Heart left ventricle (tissue), 16 donors: ENCODE measurements at regions of chr5 and their contacts with region 1.

Region 1: DNA sequence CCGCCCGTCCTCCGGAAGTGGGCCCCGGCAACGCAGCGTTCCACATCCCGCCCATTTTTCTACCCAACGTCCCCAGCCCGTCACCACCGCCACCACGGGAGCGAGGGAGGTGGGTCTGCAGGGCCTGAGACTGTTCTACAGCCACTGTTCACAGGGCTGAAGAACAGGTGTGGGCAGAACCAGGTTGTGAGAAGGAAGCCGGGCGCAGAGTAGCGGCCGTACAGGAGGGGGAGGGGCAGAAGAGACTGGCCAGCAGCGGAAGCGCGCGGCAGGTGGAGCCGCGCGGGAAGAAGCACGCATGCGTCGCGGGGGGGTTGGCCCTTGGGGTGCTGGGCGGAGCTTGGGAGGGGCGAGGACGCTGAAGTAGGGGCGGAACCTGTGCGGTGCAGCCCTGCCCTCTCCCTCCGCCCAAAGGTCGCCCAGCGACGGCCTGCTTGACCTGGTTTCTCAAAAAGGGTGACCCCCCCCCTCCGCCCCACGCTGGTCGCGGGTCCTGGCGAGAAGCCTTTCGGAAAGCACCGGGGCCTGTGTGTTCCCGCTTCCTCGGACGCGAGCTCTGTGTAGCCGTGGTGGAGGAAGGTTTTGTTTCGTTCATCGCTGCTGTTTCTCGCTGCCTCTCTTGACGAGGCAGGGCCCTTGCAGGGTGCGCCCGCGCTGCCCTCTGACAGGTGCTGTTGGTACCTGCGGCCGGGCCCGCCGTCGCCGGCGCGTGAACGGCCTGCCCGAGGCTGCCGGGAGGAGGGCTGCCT is 7.8 kb upstream of the MGAT1 start:
- DNase-seq: peak; percentile 98 to 99 (median 98)
- ATAC-seq: peak; percentile 95 to 97 (median 97)
- H3K4me3 ChIP-seq: peak overlapping the region; percentile 40 to 83 (median 71)
- H3K27ac ChIP-seq: peak overlapping the region; percentile 96 to 100 (median 99)
- H3K4me1 ChIP-seq: peaks cover 6 to 66% (median 47%) of the 10 kb centered on the region in 12 donors
- H3K27me3 ChIP-seq: no peaks in the 10 kb centered on the region
- CTCF ChIP-seq: no peak
- POLR2A ChIP-seq: peak in 1 of 2 donors; percentile 79

Region 2: GRCh38 chr5:180831139-180832048 is 21.0 kb after region 1 on chr5:
- intact Hi-C with region 1: loop called in 3 of 10 experiments (anchors 2 kb)
- DNase-seq: peak; percentile 91 to 93 (median 93)
- ATAC-seq: peak; percentile 95 to 98 (median 98)
- H3K4me3 ChIP-seq: peak overlapping the region; percentile 67 to 100 (median 87)
- H3K27ac ChIP-seq: peak overlapping the region; percentile 94 to 100 (median 98)
- H3K4me1 ChIP-seq: peaks cover 0 to 56% (median 27%) of the 10 kb centered on the region in 12 donors
- H3K27me3 ChIP-seq: no peaks in the 10 kb centered on the region
- CTCF ChIP-seq: peak in 7 of 12 donors; percentile 13 to 49 (median 36)
- POLR2A ChIP-seq: peak; percentile 45 to 74

Region 3: GRCh38 chr5:180844432-180844831 is 34.0 kb after region 1 on chr5:
- intact Hi-C with region 1: no loop called
- DNase-seq: no peak
- ATAC-seq: no peak
- H3K4me3 ChIP-seq: no peak overlapping the region
- H3K27ac ChIP-seq: no peak overlapping the region
- H3K4me1 ChIP-seq: no peaks in the 10 kb centered on the region
- H3K27me3 ChIP-seq: no peaks in the 10 kb centered on the region
- CTCF ChIP-seq: no peak
- POLR2A ChIP-seq: no peak

Region 4: GRCh38 chr5:181043285-181044092 is 233.1 kb after region 1 on chr5:
- intact Hi-C with region 1: loop called in 1 of 10 experiments (anchors 10 kb)
- DNase-seq: peak in 1 of 5 donors; percentile 42
- ATAC-seq: peak in 2 of 4 donors; percentile 30 to 48
- H3K4me3 ChIP-seq: peak overlapping the region in 11 of 12 donors; percentile 11 to 65 (median 52)
- H3K27ac ChIP-seq: peak overlapping the region; percentile 60 to 92 (median 83)
- H3K4me1 ChIP-seq: peaks cover 0 to 20% (median 0%) of the 10 kb centered on the region in 12 donors
- H3K27me3 ChIP-seq: peaks cover 0 to 33% (median 9%) of the 10 kb centered on the region in 9 donors
- CTCF ChIP-seq: peak in 8 of 12 donors; percentile 6 to 48 (median 25)
- POLR2A ChIP-seq: no peak

Region 5: DNA sequence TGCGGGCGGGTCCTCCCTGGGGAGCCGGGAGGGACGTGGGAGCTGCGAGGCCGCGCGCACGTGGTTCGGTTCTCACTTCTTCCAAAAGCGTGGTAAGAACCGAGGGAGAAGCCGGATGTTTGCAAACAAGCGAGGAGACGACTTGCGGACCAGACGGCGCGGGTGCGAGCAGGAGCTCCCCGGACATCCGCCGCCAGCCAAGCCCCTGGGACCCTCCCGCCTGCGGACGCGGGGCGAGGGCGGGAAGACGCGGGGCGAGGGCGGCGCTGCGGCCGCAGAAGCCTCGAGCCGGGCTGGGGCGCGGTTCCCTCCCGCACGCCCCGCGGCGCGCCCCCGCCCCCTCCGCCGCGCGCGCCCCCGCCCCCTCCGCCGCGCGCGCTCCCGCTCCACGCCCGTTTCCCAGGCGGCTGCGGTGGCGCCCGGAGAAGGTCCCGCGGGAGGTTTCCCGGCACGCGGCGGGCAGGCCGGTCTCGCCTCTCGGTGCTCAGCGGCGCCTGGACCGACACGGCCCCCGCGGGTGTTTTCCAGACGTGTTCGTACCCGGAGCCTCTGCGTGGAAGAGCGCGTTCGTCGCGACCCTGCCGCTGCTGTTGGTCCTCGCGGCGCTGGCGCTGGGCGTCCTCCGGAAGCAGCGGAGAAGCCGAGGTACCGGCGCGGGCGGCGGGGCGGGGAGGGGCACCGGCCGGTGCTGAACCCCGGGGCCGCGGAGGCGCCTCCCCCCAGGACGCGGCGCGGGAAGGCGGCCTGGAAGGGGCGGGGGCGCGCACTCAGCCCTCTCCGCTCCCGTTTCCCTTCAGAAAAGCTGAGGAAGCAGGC is 242.5 kb after region 1 on chr5:
- intact Hi-C with region 1: loop called in 2 of 10 experiments (anchors 5 to 10 kb)
- DNase-seq: peak in 2 of 5 donors; percentile 49 to 65
- ATAC-seq: peak in 3 of 4 donors; percentile 36 to 55 (median 47)
- H3K4me3 ChIP-seq: peak overlapping the region; percentile 34 to 72 (median 60)
- H3K27ac ChIP-seq: peak overlapping the region; percentile 57 to 94 (median 88)
- H3K4me1 ChIP-seq: peaks cover 0 to 42% (median 18%) of the 10 kb centered on the region in 12 donors
- H3K27me3 ChIP-seq: peaks cover 20 to 88% (median 66%) of the 10 kb centered on the region in 9 donors
- CTCF ChIP-seq: no peak
- POLR2A ChIP-seq: no peak

Region 6: GRCh38 chr5:181181650-181182565 is 371.5 kb after region 1 on chr5:
- intact Hi-C with region 1: loop called in 1 of 10 experiments (anchors 10 kb)
- DNase-seq: peak; percentile 68 to 79 (median 71)
- ATAC-seq: peak; percentile 72 to 87 (median 86)
- H3K4me3 ChIP-seq: no peak overlapping the region
- H3K27ac ChIP-seq: no peak overlapping the region
- H3K4me1 ChIP-seq: peaks cover 0 to 24% (median 5%) of the 10 kb centered on the region in 12 donors
- H3K27me3 ChIP-seq: peaks cover 0 to 3% (median 0%) of the 10 kb centered on the region in 9 donors
- CTCF ChIP-seq: peak; percentile 67 to 86 (median 80)
- POLR2A ChIP-seq: no peak

Region 7: DNA sequence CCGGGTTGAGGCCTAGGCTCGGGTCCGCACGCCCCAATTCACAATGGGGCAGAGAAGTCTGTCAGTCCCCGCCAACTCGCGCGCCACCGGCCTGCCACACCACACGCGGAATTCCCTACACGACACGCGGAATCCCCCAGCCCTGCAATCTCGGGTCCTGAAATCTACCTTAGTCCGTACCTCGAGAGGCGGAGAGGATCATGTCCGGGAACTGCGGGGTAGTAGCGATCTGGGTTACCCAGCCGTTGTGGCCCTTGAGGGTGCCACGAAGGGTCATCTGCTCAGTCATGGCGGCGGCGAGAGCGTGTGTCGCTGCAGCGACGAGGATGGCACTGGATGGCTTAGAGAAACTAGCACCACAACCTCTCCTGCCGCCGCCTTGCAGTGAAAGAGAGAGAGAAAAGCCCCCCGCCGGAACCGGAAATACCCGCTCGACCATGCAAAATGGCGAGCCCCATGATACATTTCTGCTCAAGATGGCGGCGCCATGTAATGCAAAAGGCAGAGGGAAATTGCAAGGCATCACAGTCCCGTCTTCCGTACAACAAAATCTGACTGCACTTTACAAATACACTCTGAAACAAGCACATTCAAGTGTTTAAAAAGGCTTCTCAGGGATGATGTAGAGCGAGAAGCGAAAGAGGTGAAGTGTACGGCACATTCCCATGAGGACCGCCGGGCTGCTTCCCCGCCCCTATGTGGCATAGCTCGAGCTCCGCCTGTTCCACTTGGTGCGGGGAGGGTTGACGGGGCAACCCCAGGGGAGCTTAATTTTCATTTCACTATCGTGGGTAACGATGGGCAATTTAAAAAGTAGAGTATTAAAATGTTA is 433.3 kb after region 1 on chr5 and contains the start of gene RACK1:
- intact Hi-C with region 1: loop called in 1 of 10 experiments (anchors 10 kb)
- DNase-seq: peak; percentile 90 to 93 (median 92)
- ATAC-seq: peak; percentile 67 to 75 (median 70)
- H3K4me3 ChIP-seq: peak within 1 kb of the TSS; percentile 68 to 90 (median 80)
- H3K27ac ChIP-seq: peak within 1 kb of the TSS; percentile 83 to 99 (median 95)
- H3K4me1 ChIP-seq: peaks cover 3 to 74% (median 47%) of the 10 kb centered on the region in 12 donors
- H3K27me3 ChIP-seq: no peaks in the 10 kb centered on the region
- CTCF ChIP-seq: no peak
- POLR2A ChIP-seq: peak in 1 of 2 donors; percentile 63
- total RNA-seq, gene RACK1: 560 to 1,237 (median 771) TPM